Transverse colon (tissue), 4 donors: ENCODE measurements at regions of chrX and their contacts with region 1.

Region 1: DNA sequence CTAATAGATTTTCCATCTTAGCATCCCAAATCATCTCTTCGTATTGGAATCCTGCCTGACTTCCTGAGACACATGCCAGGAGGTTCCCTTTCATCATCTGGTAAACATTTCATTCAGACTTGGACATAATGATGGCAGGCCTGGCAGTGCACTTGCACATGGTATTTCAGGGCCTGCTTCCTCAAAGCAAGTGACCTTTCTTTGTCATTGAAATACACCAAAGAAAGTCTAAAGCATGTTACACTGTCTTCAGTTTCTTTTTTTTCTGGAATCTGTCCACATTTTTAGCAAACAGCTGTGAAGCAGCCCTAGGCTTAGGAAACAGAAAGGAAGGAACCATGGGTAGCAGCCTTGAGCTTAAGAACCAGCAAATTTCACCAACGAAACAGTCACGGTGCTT is 205.9 kb upstream of the VCX start:
- DNase-seq: no peak
- H3K4me3 ChIP-seq: no peak overlapping the region
- H3K27ac ChIP-seq: no peak overlapping the region
- H3K4me1 ChIP-seq: no peaks in the 10 kb centered on the region
- H3K27me3 ChIP-seq: no peaks in the 10 kb centered on the region
- CTCF ChIP-seq: no peak
- EP300 ChIP-seq: no peak
- POLR2A ChIP-seq: no peak

Region 2: GRCh38 chrX:7552758-7553157 is 84.3 kb before region 1 on chrX:
- in situ Hi-C with region 1: no loop called
- intact Hi-C with region 1: loop called (anchors 2 kb)
- DNase-seq: no peak
- H3K4me3 ChIP-seq: no peak overlapping the region
- H3K27ac ChIP-seq: no peak overlapping the region
- H3K4me1 ChIP-seq: no peaks in the 10 kb centered on the region
- H3K27me3 ChIP-seq: no peaks in the 10 kb centered on the region
- CTCF ChIP-seq: no peak
- EP300 ChIP-seq: no peak
- POLR2A ChIP-seq: no peak

Region 3: GRCh38 chrX:7689791-7690412 is 52.8 kb after region 1 on chrX:
- in situ Hi-C with region 1: no loop called
- intact Hi-C with region 1: no loop called
- DNase-seq: no peak
- H3K4me3 ChIP-seq: no peak overlapping the region
- H3K27ac ChIP-seq: no peak overlapping the region
- H3K4me1 ChIP-seq: no peaks in the 10 kb centered on the region
- H3K27me3 ChIP-seq: no peaks in the 10 kb centered on the region
- CTCF ChIP-seq: no peak
- EP300 ChIP-seq: no peak
- POLR2A ChIP-seq: no peak